ENCODE measurements at regions of chr18 and their contacts with region 1.

Region 1: GRCh38 chr18:80034068-80034851 is at the start of gene RBFA:
- DNase-seq: peak; percentile 100
- ATAC-seq: peak; percentile 97
- total RNA-seq, gene RBFA: 25.3 TPM

Region 2: DNA sequence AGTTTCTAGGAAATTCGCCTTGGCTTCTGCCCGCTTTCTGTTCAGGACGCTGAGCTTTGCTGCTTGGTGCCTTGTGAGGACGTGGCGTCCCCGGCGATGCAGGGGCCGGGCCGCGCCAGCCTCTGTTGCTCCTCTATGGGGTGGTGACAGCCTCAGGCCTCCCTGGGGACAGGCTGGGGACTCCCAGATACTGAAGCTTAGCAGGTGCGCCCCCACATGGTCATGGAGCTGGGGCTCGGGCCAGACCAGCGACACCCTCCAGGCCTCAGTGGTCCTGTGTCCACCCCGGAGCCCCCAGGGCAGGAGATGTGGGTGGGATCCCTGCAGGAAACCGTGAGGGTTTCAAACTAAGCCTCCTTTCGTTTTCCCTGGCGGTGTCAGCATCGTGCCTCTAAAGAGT is 207.3 kb before region 1 on chr18:
- intact Hi-C with region 1: no loop called
- DNase-seq: no peak
- ATAC-seq: no peak

Region 3: GRCh38 chr18:80108728-80109675 is 74.7 kb after region 1 on chr18 and contains the start of gene ADNP2:
- intact Hi-C with region 1: loop called (anchors 5 kb)
- DNase-seq: peak; percentile 84
- ATAC-seq: peak; percentile 89
- total RNA-seq, gene ADNP2: 7.4 TPM

Measured in Right ventricle myocardium inferior (tissue), 1 donor.